Caco-2 (cell line): ENCODE measurements at regions of chr3 and their contacts with region 1.

Region 1: DNA sequence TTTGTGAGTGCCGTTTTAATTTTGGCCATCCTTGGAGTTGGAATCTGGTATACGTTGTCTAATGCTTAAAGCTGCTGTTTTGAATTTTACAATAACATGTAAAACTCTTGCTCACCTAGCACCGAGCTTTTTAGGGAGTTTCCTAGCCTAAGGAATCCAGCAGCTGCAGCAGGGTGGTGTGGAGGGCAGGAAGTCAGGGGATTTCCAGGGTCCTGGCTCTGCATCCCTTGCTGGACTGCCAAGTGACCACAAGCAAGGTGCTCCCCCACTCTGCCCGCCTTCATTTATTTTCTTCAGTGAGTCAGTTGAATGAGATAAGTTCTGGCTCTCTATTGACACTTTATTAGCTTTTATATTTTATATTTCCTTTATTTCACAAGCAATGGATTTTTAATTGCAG is 113.7 kb downstream of the ATG7 start:
- DNase-seq: no peak
- H3K4me3 ChIP-seq: no peak overlapping the region
- H3K4me3 Mint-ChIP-seq: no peak overlapping the region
- H3K27ac Mint-ChIP-seq: no peak overlapping the region
- H3K4me1 ChIP-seq: peaks cover 5% of the 10 kb centered on the region; the same call in 1 of the 2 replicates
- H3K4me1 Mint-ChIP-seq: peaks cover 11% of the 10 kb centered on the region
- H3K27me3 ChIP-seq: no peaks in the 10 kb centered on the region
- H3K27me3 Mint-ChIP-seq: no peaks in the 10 kb centered on the region
- CTCF ChIP-seq: no peak

Region 2: GRCh38 chr3:11306817-11307589 is 78.9 kb before region 1 on chr3:
- CTCF ChIA-PET with region 1: no interaction called
- POLR2A ChIA-PET with region 1: no interaction called
- intact Hi-C with region 1: no loop called
- DNase-seq: no peak
- H3K4me3 ChIP-seq: no peak overlapping the region
- H3K4me3 Mint-ChIP-seq: no peak overlapping the region
- H3K27ac Mint-ChIP-seq: no peak overlapping the region
- H3K4me1 ChIP-seq: no peaks in the 10 kb centered on the region
- H3K4me1 Mint-ChIP-seq: no peaks in the 10 kb centered on the region
- H3K27me3 ChIP-seq: no peaks in the 10 kb centered on the region
- H3K27me3 Mint-ChIP-seq: no peaks in the 10 kb centered on the region
- CTCF ChIP-seq: no peak

Region 3: DNA sequence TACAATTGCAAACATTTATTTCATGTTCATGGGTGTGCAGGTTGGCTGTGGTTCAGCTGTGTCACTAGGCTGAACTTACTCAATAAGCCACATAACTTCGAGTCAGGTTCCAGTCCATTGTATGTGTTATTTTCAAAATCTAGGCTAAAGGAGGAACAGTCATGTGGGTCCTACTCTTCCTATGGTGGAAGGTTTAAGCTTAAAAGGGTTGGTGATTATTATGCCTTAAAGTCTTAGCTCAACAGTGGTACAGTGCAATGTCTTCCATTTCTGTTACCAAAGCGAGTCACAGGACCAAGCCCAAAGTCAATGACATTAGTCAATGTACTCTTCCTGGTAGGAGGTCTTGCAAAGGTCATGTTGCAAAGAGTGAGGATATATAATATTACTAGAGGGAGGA is 35.5 kb before region 1 on chr3:
- CTCF ChIA-PET with region 1: no interaction called
- POLR2A ChIA-PET with region 1: no interaction called
- intact Hi-C with region 1: no loop called
- DNase-seq: no peak
- H3K4me3 ChIP-seq: no peak overlapping the region
- H3K4me3 Mint-ChIP-seq: no peak overlapping the region
- H3K27ac Mint-ChIP-seq: no peak overlapping the region
- H3K4me1 ChIP-seq: no peaks in the 10 kb centered on the region
- H3K4me1 Mint-ChIP-seq: no peaks in the 10 kb centered on the region
- H3K27me3 ChIP-seq: no peaks in the 10 kb centered on the region
- H3K27me3 Mint-ChIP-seq: no peaks in the 10 kb centered on the region
- CTCF ChIP-seq: no peak

Region 4: DNA sequence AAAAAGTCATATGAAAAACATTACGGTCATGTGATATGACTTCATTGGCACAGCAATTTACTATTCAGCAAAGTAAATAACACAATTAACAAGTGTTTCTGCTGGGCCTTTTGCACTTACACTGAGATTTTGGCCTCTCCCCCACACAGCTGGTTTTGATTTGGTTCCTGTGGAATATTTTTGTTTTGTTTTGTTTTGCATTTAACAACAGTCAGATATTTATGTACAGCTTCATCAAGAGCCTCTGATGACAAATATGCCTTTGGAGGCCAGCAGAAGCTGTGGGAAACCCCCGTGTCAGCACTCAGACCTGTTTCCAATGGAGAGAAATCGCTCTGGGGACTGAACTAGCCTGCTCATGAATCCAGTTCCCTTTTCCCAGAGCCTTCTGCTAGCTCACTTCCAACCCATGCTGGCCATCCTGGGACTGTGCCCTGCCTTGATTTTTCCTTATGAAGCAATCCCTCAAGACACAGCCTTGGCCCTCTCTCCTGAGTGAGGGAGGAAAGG is 48.2 kb after region 1 on chr3:
- CTCF ChIA-PET with region 1: no interaction called
- POLR2A ChIA-PET with region 1: no interaction called
- intact Hi-C with region 1: no loop called
- DNase-seq: no peak
- H3K4me3 ChIP-seq: no peak overlapping the region
- H3K4me3 Mint-ChIP-seq: no peak overlapping the region
- H3K27ac Mint-ChIP-seq: no peak overlapping the region
- H3K4me1 ChIP-seq: no peaks in the 10 kb centered on the region
- H3K4me1 Mint-ChIP-seq: no peaks in the 10 kb centered on the region
- H3K27me3 ChIP-seq: no peaks in the 10 kb centered on the region
- H3K27me3 Mint-ChIP-seq: no peaks in the 10 kb centered on the region
- CTCF ChIP-seq: no peak

Region 5: GRCh38 chr3:11445883-11446282 is 60.0 kb after region 1 on chr3:
- CTCF ChIA-PET with region 1: no interaction called
- POLR2A ChIA-PET with region 1: no interaction called
- intact Hi-C with region 1: no loop called
- DNase-seq: no peak
- H3K4me3 ChIP-seq: no peak overlapping the region
- H3K4me3 Mint-ChIP-seq: no peak overlapping the region
- H3K27ac Mint-ChIP-seq: no peak overlapping the region
- H3K4me1 ChIP-seq: no peaks in the 10 kb centered on the region
- H3K4me1 Mint-ChIP-seq: no peaks in the 10 kb centered on the region
- H3K27me3 ChIP-seq: no peaks in the 10 kb centered on the region
- H3K27me3 Mint-ChIP-seq: no peaks in the 10 kb centered on the region
- CTCF ChIP-seq: no peak

Region 6: GRCh38 chr3:11530153-11530721 is 144.3 kb after region 1 on chr3:
- CTCF ChIA-PET with region 1: no interaction called
- POLR2A ChIA-PET with region 1: no interaction called
- intact Hi-C with region 1: loop called (anchors 10 kb)
- DNase-seq: peak in 1 of 2 experiments; percentile 21
- H3K4me3 ChIP-seq: no peak overlapping the region
- H3K4me3 Mint-ChIP-seq: no peak overlapping the region
- H3K27ac Mint-ChIP-seq: no peak overlapping the region
- H3K4me1 ChIP-seq: no peaks in the 10 kb centered on the region
- H3K4me1 Mint-ChIP-seq: no peaks in the 10 kb centered on the region
- H3K27me3 ChIP-seq: no peaks in the 10 kb centered on the region
- H3K27me3 Mint-ChIP-seq: no peaks in the 10 kb centered on the region
- CTCF ChIP-seq: no peak

Region 7: GRCh38 chr3:11662402-11662990 is 276.6 kb after region 1 on chr3:
- CTCF ChIA-PET with region 1: interaction called, 15 read pairs
- POLR2A ChIA-PET with region 1: no interaction called
- intact Hi-C with region 1: no loop called
- DNase-seq: peak in 1 of 2 experiments; percentile 32
- H3K4me3 ChIP-seq: no peak overlapping the region
- H3K4me3 Mint-ChIP-seq: no peak overlapping the region
- H3K27ac Mint-ChIP-seq: peak overlapping the region; percentile 46
- H3K4me1 ChIP-seq: peaks cover 8% of the 10 kb centered on the region; the same call in 1 of the 2 replicates
- H3K4me1 Mint-ChIP-seq: peaks cover 23% of the 10 kb centered on the region
- H3K27me3 ChIP-seq: no peaks in the 10 kb centered on the region
- H3K27me3 Mint-ChIP-seq: no peaks in the 10 kb centered on the region
- CTCF ChIP-seq: peak; percentile 44 to 66